ENCODE measurements at regions of chr2 and their contacts with region 1.

Region 1: DNA sequence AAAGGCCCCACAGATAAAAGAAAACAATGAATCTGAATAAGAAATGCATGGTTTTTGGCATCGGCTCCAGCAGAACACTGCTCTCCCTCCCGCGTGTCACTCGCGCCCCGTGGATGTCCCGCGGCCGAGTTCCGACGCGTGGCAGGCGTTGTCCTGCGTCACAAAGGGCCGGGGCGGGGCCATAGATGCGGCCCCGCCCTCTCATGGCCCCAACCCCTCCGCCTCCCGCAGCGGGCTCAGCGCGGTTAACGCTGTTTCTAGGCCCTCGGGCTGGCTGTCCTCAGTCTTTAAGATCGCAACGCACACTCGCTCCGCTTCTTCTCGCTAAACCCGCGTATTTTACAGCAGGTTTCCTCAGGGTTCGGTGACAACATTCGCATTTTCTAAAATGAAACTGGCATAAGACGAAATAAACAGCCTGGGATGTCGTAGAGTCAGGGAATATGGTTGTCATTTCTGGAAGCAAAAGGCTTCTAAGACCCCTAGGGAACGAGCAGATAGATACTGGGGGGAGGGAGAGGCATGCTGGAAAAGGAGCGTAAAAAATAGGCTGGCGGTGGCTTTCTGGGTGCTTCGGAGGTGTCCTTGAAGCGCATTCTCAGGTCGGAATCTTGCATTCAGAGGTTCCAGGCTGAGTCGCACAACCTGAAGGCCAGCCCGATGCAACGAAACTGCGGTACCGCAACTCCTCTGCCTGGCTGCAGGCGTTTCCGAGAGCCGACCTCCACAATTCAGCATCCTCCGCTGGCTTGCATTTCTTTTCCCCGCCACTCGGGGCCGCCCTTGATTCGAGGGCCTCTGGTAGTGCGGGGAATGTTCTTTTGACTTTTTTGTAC is at the start of gene FKBP7:
- DNase-seq: peak; percentile 95
- H3K4me3 ChIP-seq: peak within 1 kb of the TSS; percentile 56 to 97 (median 64)
- H3K27ac ChIP-seq: peak within 1 kb of the TSS; percentile 88 to 95 (median 92)
- H3K4me1 ChIP-seq: peaks cover 0 to 55% (median 44%) of the 10 kb centered on the region in 4 donors
- H3K27me3 ChIP-seq: no peaks in the 10 kb centered on the region
- CTCF ChIP-seq: peak; percentile 32 to 73 (median 60)
- EP300 ChIP-seq: peak in 3 of 4 donors; percentile 47 to 53 (median 53)
- POLR2A ChIP-seq: peak; percentile 72 to 85
- total RNA-seq, gene FKBP7: 19.9 to 26.7 (median 22.6) TPM

Region 2: GRCh38 chr2:178450774-178451525 is 27.7 kb before region 1 on chr2 and contains the starts of genes PJVK and PRKRA:
- intact Hi-C with region 1: loop called (anchors 1 kb)
- DNase-seq: peak; percentile 99
- H3K4me3 ChIP-seq: peak within 1 kb of the TSS; percentile 88 to 94 (median 93)
- H3K27ac ChIP-seq: peak within 1 kb of the TSS; percentile 97 to 98 (median 98)
- H3K4me1 ChIP-seq: peaks cover 0 to 39% (median 33%) of the 10 kb centered on the region in 4 donors
- H3K27me3 ChIP-seq: no peaks in the 10 kb centered on the region
- CTCF ChIP-seq: no peak
- EP300 ChIP-seq: peak in 2 of 4 donors; percentile 29 to 36
- POLR2A ChIP-seq: peak; percentile 81 to 87
- total RNA-seq, gene PJVK: 2.9 to 8.3 (median 4.6) TPM
- total RNA-seq, gene PRKRA: 62.6 to 86.1 (median 76.7) TPM

Region 3: GRCh38 chr2:178522950-178523595 is 44.4 kb after region 1 on chr2:
- intact Hi-C with region 1: loop called (anchors 2 kb)
- DNase-seq: peak; percentile 91
- H3K4me3 ChIP-seq: peak overlapping the region; percentile 42 to 61 (median 57)
- H3K27ac ChIP-seq: peak overlapping the region; percentile 71 to 80 (median 76)
- H3K4me1 ChIP-seq: peaks cover 0 to 12% (median 3%) of the 10 kb centered on the region in 4 donors
- H3K27me3 ChIP-seq: no peaks in the 10 kb centered on the region
- CTCF ChIP-seq: peak; percentile 44 to 73 (median 49)
- EP300 ChIP-seq: no peak
- POLR2A ChIP-seq: peak in 1 of 2 donors; percentile 14

Measured in sigmoid colon (tissue), 7 donors.